ENCODE measurements at regions of chr15 and their contacts with region 1.

Region 1: DNA sequence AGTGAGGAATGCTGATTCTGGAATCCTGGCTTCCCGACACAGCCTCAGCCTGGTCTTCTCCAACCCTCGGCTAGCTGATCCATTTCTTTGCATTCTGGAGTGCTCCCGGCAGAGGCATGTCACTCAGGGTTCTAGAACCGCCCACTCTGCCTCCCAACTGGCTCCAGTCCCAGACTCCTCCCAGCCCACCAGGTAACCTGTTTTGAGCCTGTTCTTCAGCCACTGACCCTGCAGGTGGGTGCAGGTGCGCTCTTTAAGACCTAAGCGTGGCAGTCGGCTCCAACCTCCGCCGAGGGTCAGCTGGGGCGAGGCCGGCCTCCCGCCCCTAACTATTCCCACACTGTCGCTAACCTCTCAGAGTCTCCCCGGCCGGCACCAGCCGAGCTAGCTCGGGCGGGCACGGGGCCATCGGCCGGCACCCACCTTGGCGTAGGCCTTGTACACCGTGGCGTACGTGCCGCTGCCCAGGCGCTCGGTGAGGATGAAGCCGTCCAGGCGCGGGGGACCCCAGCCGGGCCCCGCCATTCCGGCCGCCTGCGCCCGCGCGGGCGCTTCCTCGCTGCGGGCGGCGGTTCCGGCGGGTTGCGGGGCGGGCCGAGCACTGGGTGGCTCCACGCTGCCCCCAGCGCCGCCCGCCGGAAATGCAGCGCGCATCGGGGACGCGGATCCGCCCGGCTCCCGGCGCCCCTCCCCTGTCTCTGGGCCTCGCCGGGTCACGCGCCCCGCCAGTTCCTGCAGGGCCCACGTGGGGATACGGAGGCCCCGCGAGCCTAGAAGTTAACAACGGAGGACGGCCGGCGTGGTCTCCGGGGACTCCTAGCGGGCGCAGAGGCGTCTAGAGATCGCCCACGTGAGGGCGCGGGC is at the start of gene ULK3:
- DNase-seq: peak; percentile 83 to 94 (median 92)
- H3K4me3 ChIP-seq: peak within 1 kb of the TSS; percentile 72 to 98 (median 93)
- H3K27ac ChIP-seq: peak within 1 kb of the TSS; percentile 66 to 97 (median 91)
- H3K27me3 ChIP-seq: no peaks in the 10 kb centered on the region
- CTCF ChIP-seq: peak in 55 of 56 donors; percentile 33 to 97 (median 72)
- total RNA-seq, gene ULK3: 55.0 to 133 (median 84.0) TPM

Region 2: DNA sequence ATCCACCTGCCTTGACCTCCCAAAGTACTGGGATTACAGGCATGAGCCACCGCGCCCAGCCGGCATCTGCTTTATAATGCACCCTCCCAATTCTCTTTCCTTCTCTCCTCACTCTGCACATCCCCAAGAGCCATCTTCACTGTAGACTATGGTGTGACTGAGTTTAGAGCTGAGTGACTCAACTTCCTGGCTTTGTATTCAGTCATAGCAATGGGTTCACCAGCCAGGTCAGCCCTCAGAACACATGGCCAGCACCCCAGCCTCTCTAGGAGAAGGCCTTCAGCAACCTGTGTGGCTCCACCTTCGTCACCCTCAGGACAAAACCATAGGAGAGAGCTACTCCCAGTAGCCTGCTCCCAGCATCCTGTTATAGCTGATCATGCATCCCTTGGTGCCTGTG is 268.8 kb before region 1 on chr15:
- intact Hi-C with region 1: no loop called
- DNase-seq: no peak
- H3K4me3 ChIP-seq: no peak overlapping the region
- H3K27ac ChIP-seq: no peak overlapping the region
- H3K27me3 ChIP-seq: no peaks in the 10 kb centered on the region
- CTCF ChIP-seq: no peak

Region 3: GRCh38 chr15:74781431-74782258 is 61.2 kb before region 1 on chr15 and contains the start of gene CSK:
- intact Hi-C with region 1: loop called (anchors 2 kb)
- DNase-seq: peak in 5 of 10 donors; percentile 43 to 84 (median 46)
- H3K4me3 ChIP-seq: peak within 1 kb of the TSS; percentile 60 to 88 (median 73)
- H3K27ac ChIP-seq: peak within 1 kb of the TSS in 56 of 59 donors; percentile 15 to 89 (median 74)
- H3K27me3 ChIP-seq: no peaks in the 10 kb centered on the region
- CTCF ChIP-seq: peak in 55 of 56 donors; percentile 41 to 78 (median 62)
- total RNA-seq, gene CSK: 28.9 to 71.0 (median 41.8) TPM

Region 4: GRCh38 chr15:74873036-74873755 is 30.4 kb after region 1 on chr15 and contains the start of gene SCAMP2:
- intact Hi-C with region 1: loop called in 1 of 2 experiments (anchors 2 kb)
- DNase-seq: peak; percentile 87 to 97 (median 96)
- H3K4me3 ChIP-seq: peak within 1 kb of the TSS; percentile 67 to 100 (median 87)
- H3K27ac ChIP-seq: peak within 1 kb of the TSS; percentile 26 to 96 (median 88)
- H3K27me3 ChIP-seq: no peaks in the 10 kb centered on the region
- CTCF ChIP-seq: peak in 32 of 56 donors; percentile 6 to 55 (median 24)
- total RNA-seq, gene SCAMP2: 19.5 to 74.6 (median 41.4) TPM

Region 5: GRCh38 chr15:74889883-74890664 is 47.3 kb after region 1 on chr15 and contains the start of gene MPI:
- intact Hi-C with region 1: no loop called
- DNase-seq: peak; percentile 84 to 95 (median 90)
- H3K4me3 ChIP-seq: peak within 1 kb of the TSS; percentile 68 to 99 (median 93)
- H3K27ac ChIP-seq: peak within 1 kb of the TSS; percentile 54 to 94 (median 85)
- H3K27me3 ChIP-seq: no peaks in the 10 kb centered on the region
- CTCF ChIP-seq: peak in 50 of 56 donors; percentile 17 to 63 (median 44)
- total RNA-seq, gene MPI: 41.5 to 82.0 (median 64.4) TPM

Region 6: DNA sequence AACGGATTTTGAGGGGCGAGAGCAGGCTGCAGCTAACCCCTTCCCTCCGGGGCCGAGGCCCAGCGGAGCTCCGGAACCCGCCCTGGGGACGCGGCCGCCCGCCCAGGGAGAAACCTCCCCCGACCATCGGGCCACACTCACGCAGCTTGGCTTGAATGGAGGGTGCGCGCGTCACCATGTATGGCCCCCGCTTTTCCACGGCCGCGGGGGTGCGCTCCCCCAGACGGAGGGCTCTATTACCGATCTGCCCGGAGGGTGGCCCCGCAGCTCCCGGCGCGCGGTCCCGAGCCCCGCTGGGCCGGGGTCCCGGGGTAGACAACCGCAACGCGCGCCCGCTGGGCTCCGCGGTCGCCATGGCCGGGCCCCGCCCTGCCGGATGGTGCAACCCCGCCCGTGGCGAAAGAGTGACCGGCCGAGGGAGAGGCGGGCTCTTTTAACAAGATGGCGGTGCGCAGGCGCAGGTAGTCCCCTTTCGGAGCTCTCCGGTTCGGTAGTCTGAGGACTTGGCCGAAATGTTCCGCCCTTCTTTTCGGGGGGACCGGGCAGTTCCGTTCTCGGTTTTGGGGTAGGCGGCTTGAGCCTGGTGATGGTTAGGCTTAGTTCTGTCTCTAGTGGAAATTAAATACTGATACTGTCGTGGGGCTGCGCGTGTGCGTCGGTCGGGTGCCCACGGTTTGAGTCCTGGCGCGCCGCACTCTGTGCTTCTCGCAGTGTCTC is 63.8 kb after region 1 on chr15 and contains the start of gene FAM219B:
- intact Hi-C with region 1: loop called (anchors 5 kb)
- DNase-seq: peak; percentile 87 to 97 (median 93)
- H3K4me3 ChIP-seq: peak within 1 kb of the TSS; percentile 65 to 99 (median 95)
- H3K27ac ChIP-seq: peak within 1 kb of the TSS; percentile 63 to 97 (median 93)
- H3K27me3 ChIP-seq: no peaks in the 10 kb centered on the region
- CTCF ChIP-seq: peak in 30 of 56 donors; percentile 5 to 60 (median 28)
- total RNA-seq, gene FAM219B: 76.8 to 142 (median 107) TPM

Region 7: DNA sequence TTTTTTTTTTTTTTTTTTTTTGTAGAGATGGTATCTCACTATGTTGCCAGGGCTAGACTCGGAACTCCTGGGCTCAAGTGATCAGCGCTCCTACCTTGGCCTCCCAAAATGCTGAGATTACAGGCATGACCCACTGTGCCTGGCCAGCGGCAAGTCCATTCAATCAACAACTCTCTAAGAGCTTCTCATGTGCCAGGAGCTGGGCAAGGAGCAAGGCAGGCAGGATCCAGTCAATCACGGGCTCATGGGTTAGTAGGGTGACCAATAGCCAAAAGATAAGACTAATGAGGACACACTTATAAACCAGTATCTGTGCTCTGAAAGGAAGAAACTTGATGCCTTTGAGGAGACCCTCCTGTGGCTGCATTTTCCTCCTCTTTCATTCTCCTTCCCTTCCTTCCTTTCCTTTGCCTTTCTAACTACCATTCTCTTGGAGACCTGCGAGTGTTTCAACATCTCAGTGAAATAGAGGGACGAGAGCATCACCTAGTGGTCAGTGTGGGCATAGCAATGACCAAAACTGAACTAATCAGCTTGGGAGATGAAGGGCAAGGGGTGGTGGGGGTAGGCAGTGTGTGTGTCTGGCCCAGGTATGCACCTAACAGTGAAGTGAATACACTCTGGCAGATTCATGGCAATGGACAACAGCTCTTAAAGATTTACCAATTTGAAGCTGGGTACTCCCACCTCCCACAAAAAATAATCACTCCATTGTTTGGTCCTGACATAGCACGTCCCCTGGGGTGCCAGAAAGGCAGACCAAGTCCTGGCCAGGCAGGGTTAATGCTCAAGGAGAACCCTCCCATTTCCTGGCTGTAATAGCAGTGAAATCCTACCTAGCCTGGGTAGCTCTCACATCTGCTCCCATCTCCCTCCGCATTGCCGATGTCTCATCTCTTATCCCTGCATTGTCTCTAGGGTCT is 107.5 kb after region 1 on chr15:
- intact Hi-C with region 1: loop called in 1 of 2 experiments (anchors 5 kb)
- DNase-seq: peak; percentile 53 to 90 (median 68)
- H3K4me3 ChIP-seq: peak overlapping the region in 1 of 59 donors; percentile 6
- H3K27ac ChIP-seq: peak overlapping the region in 6 of 59 donors; percentile 1 to 50 (median 37)
- H3K27me3 ChIP-seq: no peaks in the 10 kb centered on the region
- CTCF ChIP-seq: peak; percentile 89 to 99 (median 95)

Measured in dorsolateral prefrontal cortex (tissue), 120 donors.